ENCODE measurements at regions of chr9 and their contacts with region 1.

Region 1: GRCh38 chr9:96854073-96854876 is at the start of gene ZNF782:
- DNase-seq: peak; percentile 91
- H3K4me3 Mint-ChIP-seq: peak within 1 kb of the TSS; percentile 100
- H3K27ac Mint-ChIP-seq: peak within 1 kb of the TSS; percentile 97
- H3K4me1 Mint-ChIP-seq: peaks cover 35% of the 10 kb centered on the region
- H3K27me3 Mint-ChIP-seq: peaks cover 8% of the 10 kb centered on the region
- total RNA-seq, gene ZNF782: 2.2 to 2.8 TPM

Region 2: GRCh38 chr9:96612105-96612965 is 241.9 kb before region 1 on chr9:
- CTCF ChIA-PET with region 1: no interaction called
- intact Hi-C with region 1: no loop called
- DNase-seq: no peak
- H3K4me3 Mint-ChIP-seq: no peak overlapping the region
- H3K27ac Mint-ChIP-seq: no peak overlapping the region
- H3K4me1 Mint-ChIP-seq: no peaks in the 10 kb centered on the region
- H3K27me3 Mint-ChIP-seq: peaks cover 40% of the 10 kb centered on the region

Region 3: GRCh38 chr9:96686548-96687335 is 167.5 kb before region 1 on chr9:
- CTCF ChIA-PET with region 1: interaction called, 11 read pairs
- intact Hi-C with region 1: loop called (anchors 1 kb)
- DNase-seq: peak; percentile 85
- H3K4me3 Mint-ChIP-seq: peak overlapping the region; percentile 85
- H3K27ac Mint-ChIP-seq: peak overlapping the region; percentile 72
- H3K4me1 Mint-ChIP-seq: peaks cover 3% of the 10 kb centered on the region
- H3K27me3 Mint-ChIP-seq: peaks cover 3% of the 10 kb centered on the region

Region 4: GRCh38 chr9:96875461-96876364 is 21.4 kb after region 1 on chr9:
- CTCF ChIA-PET with region 1: interaction called, 11 read pairs
- intact Hi-C with region 1: loop called (anchors 1 kb)
- DNase-seq: peak; percentile 63
- H3K4me3 Mint-ChIP-seq: peak overlapping the region; percentile 77
- H3K27ac Mint-ChIP-seq: peak overlapping the region; percentile 77
- H3K4me1 Mint-ChIP-seq: peaks cover 25% of the 10 kb centered on the region
- H3K27me3 Mint-ChIP-seq: peaks cover 42% of the 10 kb centered on the region

Region 5: GRCh38 chr9:97237951-97238851 is 383.9 kb after region 1 on chr9:
- CTCF ChIA-PET with region 1: interaction called, 4 read pairs
- intact Hi-C with region 1: loop called (anchors 5 kb)
- DNase-seq: peak; percentile 88
- H3K4me3 Mint-ChIP-seq: peak overlapping the region; percentile 88
- H3K27ac Mint-ChIP-seq: peak overlapping the region; percentile 81
- H3K4me1 Mint-ChIP-seq: peaks cover 14% of the 10 kb centered on the region
- H3K27me3 Mint-ChIP-seq: no peaks in the 10 kb centered on the region

Region 6: DNA sequence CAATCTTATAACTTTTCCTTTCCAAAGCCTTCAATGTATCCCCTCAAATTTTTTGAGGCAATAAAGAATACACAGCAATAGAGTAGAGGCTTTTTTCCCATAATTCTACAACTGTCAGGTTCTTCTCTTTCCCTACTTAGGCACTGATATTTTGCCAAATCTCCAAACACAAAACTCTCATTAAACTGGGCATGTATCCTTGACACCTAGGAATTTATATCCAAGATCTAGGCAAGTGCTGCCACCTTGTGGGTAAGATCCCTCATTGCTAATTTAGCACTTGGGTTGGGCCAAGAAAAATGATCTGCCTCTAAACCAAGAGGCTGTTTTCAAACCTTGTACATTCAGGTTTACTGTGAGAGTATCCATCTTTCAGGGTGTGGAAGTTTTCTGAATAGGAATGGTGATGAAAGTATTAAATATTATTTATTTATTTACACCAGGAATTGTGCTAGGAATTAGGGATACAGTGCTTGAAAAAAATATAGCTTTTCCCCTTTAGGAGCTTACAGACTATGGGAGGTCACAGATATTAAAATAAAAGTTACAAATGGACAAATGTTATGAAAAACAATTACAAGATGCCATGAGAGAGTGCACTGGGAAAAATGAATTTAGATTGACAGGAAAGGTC is 761.3 kb after region 1 on chr9:
- CTCF ChIA-PET with region 1: interaction called, 8 read pairs
- intact Hi-C with region 1: loop called (anchors 5 kb)
- DNase-seq: peak; percentile 79
- H3K4me3 Mint-ChIP-seq: no peak overlapping the region
- H3K27ac Mint-ChIP-seq: no peak overlapping the region
- H3K4me1 Mint-ChIP-seq: peaks cover 15% of the 10 kb centered on the region
- H3K27me3 Mint-ChIP-seq: no peaks in the 10 kb centered on the region